Posterior vena cava (tissue), 2 donors: ENCODE measurements at regions of chr1 and their contacts with region 1.

Region 1: DNA sequence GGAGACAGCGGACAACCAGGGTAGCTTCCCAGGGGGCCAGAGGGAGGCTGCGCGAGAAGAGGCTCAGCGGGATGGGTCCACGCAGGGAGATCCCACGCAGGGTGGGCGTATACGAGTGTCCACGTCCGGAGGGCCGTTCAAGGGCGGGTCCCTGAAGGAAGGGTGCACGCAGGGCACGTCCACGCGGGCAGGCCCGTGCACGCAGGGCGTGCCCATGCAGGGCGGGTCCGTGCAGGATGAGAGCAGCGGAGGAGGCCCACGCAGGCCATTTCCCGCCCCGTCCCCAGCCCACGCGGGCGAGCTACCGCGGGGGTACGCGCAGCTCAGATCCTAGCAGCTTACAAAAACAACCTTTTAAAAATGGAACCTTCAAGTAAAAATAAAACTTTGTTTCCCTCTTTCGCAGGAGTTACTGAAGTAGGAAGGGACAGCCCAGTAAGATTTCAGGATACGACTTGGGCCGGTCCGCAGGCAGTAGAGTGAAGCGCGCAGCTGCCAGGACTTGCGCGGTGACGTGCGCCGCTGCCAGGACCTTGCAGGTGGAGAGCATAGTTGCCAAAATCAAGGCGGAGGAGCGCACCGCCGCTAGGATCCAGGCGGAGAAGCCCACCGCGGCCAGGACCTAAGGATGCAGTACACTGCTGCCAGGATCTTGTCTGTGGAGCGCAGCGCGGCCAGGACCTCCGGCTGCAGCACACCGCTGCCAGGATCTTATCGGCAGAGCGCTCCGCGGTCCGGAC is 416 bp upstream of the RNF187 start:
- DNase-seq: peak; percentile 95

Region 2: DNA sequence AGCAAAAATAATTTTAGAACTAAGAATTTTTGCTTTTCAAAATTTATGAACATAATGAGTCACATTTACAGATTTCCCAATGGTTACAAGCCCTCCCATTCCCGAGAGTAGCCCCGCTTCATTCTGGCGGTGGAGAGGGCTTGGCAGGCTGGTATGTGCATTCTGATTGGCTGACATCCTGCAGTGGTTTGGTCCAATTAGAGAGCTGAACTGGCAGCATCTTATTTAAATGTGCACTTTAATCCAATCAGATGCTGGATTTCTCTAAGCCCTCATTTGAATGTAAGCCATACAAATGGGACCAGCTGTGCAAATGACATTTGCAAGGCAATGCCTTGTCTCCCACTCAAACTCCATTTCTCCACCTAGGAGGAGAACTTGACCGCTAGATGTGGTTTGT is 52.1 kb before region 1 on chr1:
- intact Hi-C with region 1: no loop called
- DNase-seq: peak; percentile 24

Region 3: DNA sequence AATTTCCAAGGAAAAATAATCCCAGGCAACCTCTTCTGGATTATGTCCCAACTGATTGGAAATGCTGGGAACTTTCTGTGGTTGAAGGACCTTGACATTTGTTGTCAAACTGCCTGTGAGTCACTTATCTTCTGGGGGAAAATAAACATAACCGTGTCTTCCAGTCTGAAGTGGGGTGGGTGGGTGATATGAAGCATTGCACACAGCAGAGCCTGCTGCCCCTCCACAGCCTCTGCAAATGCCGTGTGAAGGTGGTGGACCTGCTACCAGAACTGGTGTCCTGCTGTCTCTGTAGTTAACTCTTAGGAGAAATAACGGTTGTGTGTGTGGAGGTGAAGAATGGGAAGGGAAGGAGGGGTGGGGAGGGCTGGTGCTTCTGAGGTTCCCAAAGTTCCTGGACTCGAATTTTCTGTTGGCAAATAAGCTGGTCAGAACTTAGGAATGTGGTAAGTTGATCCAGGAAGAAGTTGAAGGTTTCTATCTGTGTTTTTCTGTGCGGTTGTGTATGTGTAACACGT is 1603.5 kb after region 1 on chr1:
- intact Hi-C with region 1: loop called in 1 of 2 experiments (anchors 5 kb)
- DNase-seq: no peak